ENCODE measurements at regions of chr16 and their contacts with region 1.

Region 1: DNA sequence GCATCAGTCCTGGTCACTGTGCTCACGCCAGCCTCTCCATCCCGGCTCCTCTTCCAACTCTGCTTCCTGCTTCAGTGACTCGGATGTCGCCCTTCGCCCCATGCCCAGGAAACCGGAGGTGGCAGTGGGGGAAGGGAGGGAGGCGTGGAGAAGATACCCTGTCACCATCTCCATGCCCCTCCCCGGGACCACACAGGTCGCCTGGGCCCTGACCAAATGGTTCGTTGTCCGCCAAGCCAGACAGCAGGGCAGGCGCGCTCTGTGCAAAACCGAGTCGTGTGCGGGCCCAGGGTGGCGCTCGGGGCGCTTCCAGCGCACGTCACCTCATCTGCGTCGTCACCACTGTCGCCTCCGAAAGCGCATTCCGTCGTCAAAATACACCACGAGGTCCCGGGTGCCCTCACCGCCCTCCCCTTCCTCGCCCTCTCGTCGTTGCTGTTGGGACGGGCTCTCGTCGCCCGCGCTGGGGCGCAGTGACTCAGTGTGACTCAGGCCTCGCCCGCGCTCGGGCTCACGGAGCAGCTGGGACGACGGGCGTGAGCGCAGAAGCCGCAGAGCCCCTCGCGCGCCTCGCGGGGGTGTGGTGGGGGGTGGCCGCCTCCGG is 39.2 kb downstream of the ZNF778 start:
- DNase-seq: no peak
- H3K4me3 ChIP-seq: no peak overlapping the region
- H3K4me1 ChIP-seq: no peaks in the 10 kb centered on the region
- H3K27me3 ChIP-seq: no peaks in the 10 kb centered on the region

Region 2: GRCh38 chr16:87713451-87714229 is 1543.1 kb before region 1 on chr16:
- in situ Hi-C with region 1: no loop called
- DNase-seq: no peak
- H3K4me3 ChIP-seq: no peak overlapping the region
- H3K4me1 ChIP-seq: no peaks in the 10 kb centered on the region
- H3K27me3 ChIP-seq: no peaks in the 10 kb centered on the region

Region 3: DNA sequence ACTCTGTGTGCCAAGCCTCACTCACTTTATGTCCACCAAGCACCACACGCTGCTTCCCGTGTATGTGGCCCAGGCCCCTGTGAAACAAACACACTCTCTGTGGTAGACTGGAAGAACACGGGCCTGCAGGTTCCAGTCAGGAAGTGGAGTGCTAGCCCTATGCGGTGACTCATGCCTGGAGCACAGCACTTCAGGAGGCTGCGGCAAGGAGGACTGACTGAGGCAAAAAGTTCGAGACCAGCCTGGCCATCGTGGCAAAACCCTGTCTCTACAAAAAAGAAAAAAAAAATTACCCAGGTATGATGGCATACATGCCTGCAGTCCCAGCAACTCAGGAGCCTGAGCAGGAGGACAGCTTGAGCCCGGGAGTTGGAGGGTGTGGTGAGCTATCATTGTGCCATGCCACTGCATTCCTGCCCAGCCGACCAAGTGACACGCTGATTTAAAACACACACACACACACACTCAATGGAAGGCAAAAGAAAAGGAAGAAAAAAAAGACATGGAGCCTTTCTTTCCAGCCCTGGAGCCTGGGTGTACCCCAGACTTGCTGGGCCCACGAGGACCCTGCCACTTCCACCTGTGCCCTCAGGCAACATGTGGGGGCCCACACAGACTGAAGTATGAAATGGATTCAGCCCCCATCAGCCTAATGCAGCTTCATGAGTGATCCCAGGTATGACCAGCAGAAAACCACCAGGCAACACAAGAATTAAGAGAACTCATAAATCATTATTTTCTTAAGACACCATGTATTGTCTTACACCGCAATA is 107.1 kb after region 1 on chr16:
- in situ Hi-C with region 1: loop called (anchors 25 kb)
- DNase-seq: no peak
- H3K4me3 ChIP-seq: no peak overlapping the region
- H3K4me1 ChIP-seq: no peaks in the 10 kb centered on the region; the same call in 1 of the 2 replicates
- H3K27me3 ChIP-seq: no peaks in the 10 kb centered on the region

Measured in HAP-1 (cell line).